ENCODE measurements at regions of chr1 and their contacts with region 1.

Region 1: GRCh38 chr1:89685461-89685860 is 52.5 kb downstream of the LRRC8C start:
- DNase-seq: no peak
- ATAC-seq: no peak
- H3K4me3 ChIP-seq: no peak overlapping the region
- H3K4me3 Mint-ChIP-seq: no peak overlapping the region
- H3K27ac ChIP-seq: no peak overlapping the region
- H3K27ac Mint-ChIP-seq: peak overlapping the region; percentile 41 to 85
- H3K4me1 ChIP-seq: peaks cover 0 to 13% of the 10 kb centered on the region in 2 experiments
- H3K4me1 Mint-ChIP-seq: peaks cover 56 to 71% (median 70%) of the 10 kb centered on the region in 3 donors
- H3K27me3 ChIP-seq: no peaks in the 10 kb centered on the region
- H3K27me3 Mint-ChIP-seq: no peaks in the 10 kb centered on the region

Region 2: GRCh38 chr1:89552471-89553081 is 132.9 kb before region 1 on chr1:
- CTCF ChIA-PET with region 1: interaction called in 1 of 2 experiments, 11 read pairs
- POLR2A ChIA-PET with region 1: no interaction called
- DNase-seq: peak in 2 of 35 experiments; percentile 2 to 22
- ATAC-seq: peak in 1 of 4 experiments; percentile 61
- H3K4me3 ChIP-seq: peak overlapping the region in 1 of 2 donors; percentile 18
- H3K4me3 Mint-ChIP-seq: peak overlapping the region; percentile 17 to 47 (median 34)
- H3K27ac ChIP-seq: peak overlapping the region; percentile 2
- H3K27ac Mint-ChIP-seq: peak overlapping the region in 1 of 2 donors; percentile 69
- H3K4me1 ChIP-seq: peaks cover 3 to 13% of the 10 kb centered on the region in 2 experiments
- H3K4me1 Mint-ChIP-seq: peaks cover 54 to 72% (median 64%) of the 10 kb centered on the region in 3 donors
- H3K27me3 ChIP-seq: no peaks in the 10 kb centered on the region
- H3K27me3 Mint-ChIP-seq: no peaks in the 10 kb centered on the region

Region 3: DNA sequence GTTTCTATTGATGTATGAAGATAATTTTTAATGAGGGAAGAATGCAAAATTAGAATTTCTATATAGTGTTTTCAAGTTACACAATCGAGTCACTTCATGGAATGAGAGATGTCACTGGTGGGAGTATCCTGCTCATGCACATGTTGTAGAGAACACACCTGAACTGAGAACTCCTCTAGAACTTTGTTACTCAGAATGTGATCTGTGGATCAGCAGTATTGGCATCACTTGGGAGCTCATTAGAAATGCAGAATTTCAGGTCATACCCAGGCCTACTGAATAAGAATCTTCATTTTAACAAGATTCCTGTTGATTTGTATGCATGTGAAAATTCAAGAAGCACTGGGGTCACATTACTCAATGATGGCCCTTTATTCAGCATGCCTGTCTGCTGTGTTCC is 338.2 kb after region 1 on chr1:
- CTCF ChIA-PET with region 1: no interaction called
- POLR2A ChIA-PET with region 1: no interaction called
- DNase-seq: no peak
- ATAC-seq: no peak
- H3K4me3 ChIP-seq: no peak overlapping the region
- H3K4me3 Mint-ChIP-seq: no peak overlapping the region
- H3K27ac ChIP-seq: no peak overlapping the region
- H3K27ac Mint-ChIP-seq: no peak overlapping the region
- H3K4me1 ChIP-seq: no peaks in the 10 kb centered on the region
- H3K4me1 Mint-ChIP-seq: peaks cover 0 to 12% (median 0%) of the 10 kb centered on the region in 3 donors
- H3K27me3 ChIP-seq: no peaks in the 10 kb centered on the region
- H3K27me3 Mint-ChIP-seq: no peaks in the 10 kb centered on the region